HEK293 (cell line): ENCODE measurements at regions of chr17 and their contacts with region 1.

Region 1: GRCh38 chr17:35119368-35120165 is at the start of gene RAD51D:
- H3K4me3 ChIP-seq: peak within 1 kb of the TSS; percentile 72
- H3K27ac ChIP-seq: peak within 1 kb of the TSS; percentile 58
- H3K4me1 ChIP-seq: peaks cover 5% of the 10 kb centered on the region
- CTCF ChIP-seq: peak; percentile 97

Region 2: DNA sequence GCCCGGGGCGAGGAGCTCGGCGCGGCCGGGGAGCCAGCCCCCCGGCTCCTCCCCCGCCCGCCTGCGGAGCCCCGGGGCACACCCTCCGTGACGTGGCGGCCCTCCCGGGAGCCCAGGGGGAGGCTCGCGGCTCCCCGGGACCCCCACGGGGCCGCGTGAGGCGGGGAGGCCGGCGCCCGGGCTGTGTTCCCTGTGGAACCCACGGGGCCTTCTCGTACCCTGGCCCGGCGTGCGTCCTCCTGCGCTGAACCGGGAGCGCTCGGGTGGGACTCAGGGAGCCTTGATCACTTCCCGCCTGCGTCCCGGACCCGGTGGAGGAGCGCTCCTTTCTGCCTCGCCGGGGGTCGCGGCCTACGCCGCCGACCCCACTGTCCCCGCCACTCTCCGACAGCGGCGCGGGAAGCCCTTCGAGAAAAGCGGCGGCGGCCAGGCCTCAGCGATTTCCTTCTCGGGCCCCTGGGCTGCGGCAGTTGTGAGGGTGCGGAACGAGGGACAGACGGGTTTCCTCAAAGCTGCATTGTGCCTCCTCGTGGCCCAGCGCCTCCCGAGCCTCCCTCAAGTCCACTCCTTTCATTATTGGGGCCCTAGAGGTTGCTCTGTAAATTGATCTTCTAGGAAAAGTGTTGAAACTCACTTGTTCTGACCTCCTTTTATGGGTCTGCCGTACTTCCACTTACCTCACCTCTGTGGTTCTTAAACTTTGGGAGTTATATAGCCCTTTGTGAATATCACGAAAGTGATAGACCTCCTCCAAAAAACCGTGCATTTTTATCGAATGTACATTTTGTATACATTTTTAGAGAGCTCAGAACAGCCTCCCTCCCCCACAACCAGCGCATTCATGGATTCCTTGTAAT is 138.7 kb before region 1 on chr17:
- CTCF ChIA-PET with region 1: interaction called, 12 read pairs
- POLR2A ChIA-PET with region 1: no interaction called
- H3K4me3 ChIP-seq: peak overlapping the region; percentile 84
- H3K27ac ChIP-seq: peak overlapping the region; percentile 94
- H3K4me1 ChIP-seq: peaks cover 10% of the 10 kb centered on the region
- CTCF ChIP-seq: peak; percentile 84

Region 3: GRCh38 chr17:34998205-34998604 is 121.4 kb before region 1 on chr17:
- CTCF ChIA-PET with region 1: interaction called, 79 read pairs
- POLR2A ChIA-PET with region 1: interaction called, 3 read pairs
- H3K4me3 ChIP-seq: no peak overlapping the region
- H3K27ac ChIP-seq: no peak overlapping the region
- H3K4me1 ChIP-seq: no peaks in the 10 kb centered on the region
- CTCF ChIP-seq: peak; percentile 90

Region 4: GRCh38 chr17:35063514-35064223 is 55.9 kb before region 1 on chr17 and contains the start of gene RFFL:
- CTCF ChIA-PET with region 1: interaction called, 18 read pairs
- POLR2A ChIA-PET with region 1: no interaction called
- H3K4me3 ChIP-seq: peak within 1 kb of the TSS; percentile 22
- H3K27ac ChIP-seq: peak within 1 kb of the TSS; percentile 77
- H3K4me1 ChIP-seq: peaks cover 17% of the 10 kb centered on the region
- CTCF ChIP-seq: peak; percentile 69; the same call in 1 of the 2 replicates

Region 5: GRCh38 chr17:35088881-35089585 is 30.5 kb before region 1 on chr17:
- CTCF ChIA-PET with region 1: interaction called, 21 read pairs
- POLR2A ChIA-PET with region 1: interaction called, 6 read pairs
- H3K4me3 ChIP-seq: peak overlapping the region; percentile 56
- H3K27ac ChIP-seq: peak overlapping the region; percentile 81
- H3K4me1 ChIP-seq: 0 out of 2 replicates have a peak, but pooled peaks cover 3% of the 10 kb centered on the region
- CTCF ChIP-seq: peak; percentile 71

Region 6: GRCh38 chr17:35175638-35176415 is 56.3 kb after region 1 on chr17:
- CTCF ChIA-PET with region 1: no interaction called
- POLR2A ChIA-PET with region 1: no interaction called
- H3K4me3 ChIP-seq: no peak overlapping the region
- H3K27ac ChIP-seq: no peak overlapping the region
- H3K4me1 ChIP-seq: no peaks in the 10 kb centered on the region
- CTCF ChIP-seq: no peak